Activated CD8-positive, alpha-beta T cell treated with anti-CD3 and anti-CD28 coated beads for 36 hours (primary cell): ENCODE measurements at regions of chr11 and their contacts with region 1.

Region 1: GRCh38 chr11:3091791-3092602 is 34.8 kb upstream of the CARS1 start:
- DNase-seq: peak; percentile 79
- ATAC-seq: peak; percentile 96
- H3K4me3 Mint-ChIP-seq: no peak overlapping the region
- H3K27ac Mint-ChIP-seq: no peak overlapping the region
- H3K4me1 Mint-ChIP-seq: no peaks in the 10 kb centered on the region
- H3K27me3 Mint-ChIP-seq: no peaks in the 10 kb centered on the region
- CTCF ChIP-seq: peak; percentile 93

Region 2: DNA sequence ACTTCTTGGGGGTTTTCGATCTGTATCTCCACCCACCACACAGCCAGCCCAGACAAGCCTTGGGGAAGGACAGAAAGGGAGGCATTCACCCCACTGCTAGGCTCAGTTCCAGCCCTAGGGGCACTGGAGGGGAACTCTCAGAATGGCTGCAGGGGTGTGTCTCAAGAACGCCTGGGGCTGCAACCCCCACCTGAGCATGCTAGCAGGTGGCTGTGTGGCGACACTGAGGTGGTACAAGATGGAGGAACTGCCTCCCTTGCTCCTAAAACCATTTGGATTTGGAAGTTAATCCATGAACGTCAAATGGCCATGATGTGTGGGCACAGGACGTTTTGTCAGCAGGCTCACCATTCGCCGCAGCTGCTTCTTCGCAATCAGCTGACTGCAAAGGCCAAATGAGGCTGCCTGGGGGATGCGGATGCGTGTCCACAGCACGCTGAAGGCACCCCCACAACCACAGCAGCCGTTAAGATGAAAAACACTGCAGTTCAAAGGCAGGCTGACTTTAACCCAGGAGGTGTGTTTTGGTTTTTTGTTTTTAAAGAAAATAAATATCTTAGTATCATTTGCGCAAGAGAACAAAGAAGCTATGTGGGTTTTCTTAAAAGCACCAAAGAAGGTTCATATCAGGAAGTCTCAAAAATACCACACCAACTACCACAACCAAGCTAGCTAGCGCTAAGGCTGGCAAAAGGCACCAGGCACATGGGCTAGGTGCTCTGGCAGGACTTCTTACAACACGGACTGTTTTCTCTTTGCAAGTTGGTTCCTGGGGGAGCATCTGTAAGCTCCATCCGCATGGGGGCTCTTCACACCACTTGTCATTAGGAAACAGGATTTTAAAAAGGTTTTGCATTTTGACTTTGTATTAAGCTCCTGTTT is 77.7 kb before region 1 on chr11:
- CTCF ChIA-PET with region 1: interaction called, 12 read pairs
- POLR2A ChIA-PET with region 1: no interaction called
- intact Hi-C with region 1: no loop called
- DNase-seq: peak; percentile 92
- ATAC-seq: peak; percentile 79
- H3K4me3 Mint-ChIP-seq: peak overlapping the region; percentile 31
- H3K27ac Mint-ChIP-seq: peak overlapping the region; percentile 91
- H3K4me1 Mint-ChIP-seq: peaks cover 70% of the 10 kb centered on the region
- H3K27me3 Mint-ChIP-seq: no peaks in the 10 kb centered on the region
- CTCF ChIP-seq: peak; percentile 23

Region 3: GRCh38 chr11:3049430-3050243 is 42.4 kb before region 1 on chr11:
- CTCF ChIA-PET with region 1: interaction called, 16 read pairs
- POLR2A ChIA-PET with region 1: interaction called, 3 read pairs
- intact Hi-C with region 1: no loop called
- DNase-seq: peak; percentile 78
- ATAC-seq: peak; percentile 93
- H3K4me3 Mint-ChIP-seq: peak overlapping the region; percentile 13
- H3K27ac Mint-ChIP-seq: peak overlapping the region; percentile 81
- H3K4me1 Mint-ChIP-seq: peaks cover 46% of the 10 kb centered on the region
- H3K27me3 Mint-ChIP-seq: no peaks in the 10 kb centered on the region
- CTCF ChIP-seq: no peak

Region 4: GRCh38 chr11:3073029-3073435 is 19.0 kb before region 1 on chr11:
- CTCF ChIA-PET with region 1: interaction called, 10 read pairs
- POLR2A ChIA-PET with region 1: interaction called, 3 read pairs
- intact Hi-C with region 1: no loop called
- DNase-seq: no peak
- ATAC-seq: no peak
- H3K4me3 Mint-ChIP-seq: no peak overlapping the region
- H3K27ac Mint-ChIP-seq: no peak overlapping the region
- H3K4me1 Mint-ChIP-seq: no peaks in the 10 kb centered on the region
- H3K27me3 Mint-ChIP-seq: no peaks in the 10 kb centered on the region
- CTCF ChIP-seq: no peak

Region 5: GRCh38 chr11:3189196-3189843 is 97.3 kb after region 1 on chr11:
- CTCF ChIA-PET with region 1: no interaction called
- POLR2A ChIA-PET with region 1: no interaction called
- intact Hi-C with region 1: no loop called
- DNase-seq: no peak
- ATAC-seq: no peak
- H3K4me3 Mint-ChIP-seq: no peak overlapping the region
- H3K27ac Mint-ChIP-seq: no peak overlapping the region
- H3K4me1 Mint-ChIP-seq: no peaks in the 10 kb centered on the region
- H3K27me3 Mint-ChIP-seq: no peaks in the 10 kb centered on the region
- CTCF ChIP-seq: no peak